AG04449 (cell line): ENCODE measurements at regions of chr4 and their contacts with region 1.

Region 1: GRCh38 chr4:54233277-54233696 is 4.2 kb downstream of the PDGFRA start:
- DNase-seq: no peak
- H3K4me3 ChIP-seq: peak overlapping the region; percentile 93
- CTCF ChIP-seq: peak; percentile 86

Region 2: GRCh38 chr4:53010318-53010717 is 1223.0 kb before region 1 on chr4:
- CTCF ChIA-PET with region 1: interaction called, 63 read pairs
- POLR2A ChIA-PET with region 1: no interaction called
- DNase-seq: no peak
- H3K4me3 ChIP-seq: no peak overlapping the region
- CTCF ChIP-seq: no peak

Region 3: GRCh38 chr4:53380221-53380620 is 853.1 kb before region 1 on chr4:
- CTCF ChIA-PET with region 1: interaction called, 17 read pairs
- POLR2A ChIA-PET with region 1: no interaction called
- DNase-seq: no peak
- H3K4me3 ChIP-seq: no peak overlapping the region
- CTCF ChIP-seq: no peak

Region 4: GRCh38 chr4:53717064-53717549 is 516.2 kb before region 1 on chr4:
- CTCF ChIA-PET with region 1: interaction called, 46 read pairs
- POLR2A ChIA-PET with region 1: interaction called, 4 read pairs
- DNase-seq: no peak
- H3K4me3 ChIP-seq: no peak overlapping the region
- CTCF ChIP-seq: no peak

Region 5: DNA sequence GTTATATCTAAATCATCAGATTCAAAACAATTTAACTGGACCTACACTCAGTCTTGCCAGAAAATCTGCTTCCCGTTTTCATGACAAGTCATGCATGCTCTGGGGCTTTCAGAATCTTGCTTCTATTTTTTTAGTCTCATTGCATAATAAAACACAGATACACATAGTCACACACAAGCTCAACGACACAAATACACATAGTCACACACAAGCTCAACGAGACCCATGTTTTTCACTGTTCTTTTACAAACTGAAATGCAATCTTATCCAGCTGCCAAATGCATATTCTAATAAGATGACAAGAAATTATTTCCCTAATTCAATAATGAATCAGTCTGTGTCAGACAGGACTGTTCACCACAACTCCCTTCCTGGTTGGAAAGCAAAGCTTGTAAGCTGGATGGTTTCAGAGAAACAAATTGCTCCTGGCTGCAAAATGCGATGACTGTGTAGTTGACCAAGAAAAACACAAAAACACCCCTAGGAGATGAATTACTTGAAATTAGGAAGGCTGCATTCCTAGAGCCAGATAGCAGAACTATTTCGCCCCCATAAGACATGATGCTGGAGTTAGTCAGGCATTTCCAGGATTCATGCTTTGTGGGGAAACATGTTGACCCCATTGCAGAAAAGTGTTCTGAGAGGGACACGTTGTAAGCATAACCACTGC is 377.6 kb before region 1 on chr4:
- CTCF ChIA-PET with region 1: interaction called, 5 read pairs
- POLR2A ChIA-PET with region 1: interaction called, 10 read pairs
- DNase-seq: peak; percentile 89
- H3K4me3 ChIP-seq: no peak overlapping the region
- CTCF ChIP-seq: no peak

Region 6: DNA sequence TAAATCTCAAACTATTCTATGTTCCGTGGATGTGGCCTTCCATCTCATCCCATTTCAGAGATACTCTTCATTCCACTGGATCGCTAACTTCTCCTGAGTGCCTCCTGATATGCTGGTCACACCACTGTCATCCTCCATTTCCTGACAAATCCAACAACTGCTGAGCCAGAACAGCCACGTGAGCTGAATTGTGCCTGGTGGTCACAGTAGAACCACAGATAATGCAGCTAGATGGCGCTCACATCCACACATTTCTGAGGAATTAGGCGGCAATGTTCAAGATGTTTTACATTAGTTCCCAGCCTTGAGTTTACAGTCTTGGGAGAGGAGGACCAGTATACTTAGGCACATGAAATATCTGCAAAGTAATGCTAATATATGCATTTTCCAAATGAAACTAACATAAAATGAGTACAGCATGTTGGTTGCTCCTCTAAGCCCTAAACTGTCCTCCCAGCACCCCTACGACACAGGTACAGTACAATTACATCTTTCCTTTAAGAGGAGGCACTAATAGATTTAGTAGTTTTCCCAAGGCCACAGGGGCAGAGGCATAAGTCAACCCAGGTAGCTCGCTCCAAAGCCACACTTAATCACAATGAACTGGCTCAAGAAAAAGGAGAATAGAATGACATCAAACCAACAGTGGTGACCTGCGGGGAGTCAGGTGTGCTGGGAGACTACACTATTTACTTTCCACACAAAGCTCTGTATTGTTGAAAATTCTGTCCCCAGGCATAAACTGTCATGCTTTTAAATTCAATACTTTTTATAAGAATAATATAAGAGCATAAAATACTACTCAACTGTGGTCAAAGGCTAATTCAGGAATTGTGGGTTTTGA is 303.1 kb before region 1 on chr4:
- CTCF ChIA-PET with region 1: interaction called, 74 read pairs
- POLR2A ChIA-PET with region 1: interaction called, 4 read pairs
- DNase-seq: peak; percentile 71
- H3K4me3 ChIP-seq: no peak overlapping the region
- CTCF ChIP-seq: peak; percentile 74

Region 7: DNA sequence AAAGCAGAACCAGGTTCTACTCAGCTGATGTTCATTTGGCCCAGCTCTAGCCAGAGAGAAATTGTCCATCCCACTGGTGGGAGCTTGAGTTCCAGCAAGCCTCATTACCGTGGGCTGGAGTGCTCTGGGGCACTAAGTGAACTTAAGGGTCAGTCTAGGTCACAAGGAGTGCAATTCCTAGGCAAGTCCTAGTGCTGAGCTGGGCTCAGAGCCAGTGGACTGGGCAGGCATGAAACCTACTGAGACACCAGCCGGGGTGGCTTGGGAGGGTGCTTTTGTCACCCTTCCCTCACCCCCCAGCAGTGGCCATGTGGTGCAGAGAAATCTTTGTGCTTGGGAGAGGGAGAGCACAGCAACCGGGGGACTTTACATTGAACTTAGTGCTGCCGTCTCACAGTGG is 94.0 kb before region 1 on chr4:
- CTCF ChIA-PET with region 1: no interaction called
- POLR2A ChIA-PET with region 1: no interaction called
- DNase-seq: no peak
- H3K4me3 ChIP-seq: no peak overlapping the region
- CTCF ChIP-seq: no peak

Region 8: GRCh38 chr4:54197926-54198325 is 35.4 kb before region 1 on chr4:
- CTCF ChIA-PET with region 1: no interaction called
- POLR2A ChIA-PET with region 1: no interaction called
- DNase-seq: no peak
- H3K4me3 ChIP-seq: no peak overlapping the region
- CTCF ChIP-seq: no peak